Sciatic nerve (tissue), 2 donors: ENCODE measurements at regions of chr5 and their contacts with region 1.

Region 1: DNA sequence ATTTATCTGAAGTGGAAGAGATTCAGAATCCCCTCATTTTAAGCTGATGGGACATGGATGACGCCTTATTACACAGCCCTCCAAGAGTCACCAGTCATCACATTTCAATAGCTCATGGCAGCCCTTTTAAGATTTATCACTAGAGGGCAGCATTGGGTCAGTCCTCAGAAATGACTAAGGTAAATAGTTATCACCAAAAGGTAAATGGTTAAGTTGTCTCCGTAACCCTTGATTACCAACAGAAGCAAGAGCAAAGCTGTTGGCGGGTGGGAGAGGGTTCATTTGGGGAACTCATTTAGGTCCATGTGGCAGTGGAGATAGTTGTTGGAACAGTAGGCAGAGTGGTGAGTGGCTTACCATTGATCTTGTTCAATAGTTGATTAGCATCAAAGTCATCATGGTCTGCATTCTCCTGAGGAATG is 12.0 kb upstream of the C9 start:
- DNase-seq: no peak
- ATAC-seq: peak; percentile 65

Region 2: DNA sequence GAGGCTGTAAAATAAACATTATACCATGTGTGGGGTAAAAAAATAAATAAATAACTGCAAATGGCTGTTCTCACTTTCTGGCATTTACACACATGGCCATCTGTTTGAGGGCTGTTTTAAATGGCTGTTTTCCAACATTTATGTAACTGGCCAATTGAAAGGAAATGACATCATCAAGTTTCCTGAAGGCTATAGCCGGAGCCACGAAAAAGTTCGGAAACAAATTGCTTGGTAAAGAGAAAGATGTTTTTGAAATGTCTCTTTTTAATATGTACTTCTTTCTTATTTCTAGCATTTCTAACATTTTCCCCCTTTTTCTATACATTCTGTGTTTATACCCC is 143.9 kb after region 1 on chr5:
- intact Hi-C with region 1: no loop called
- DNase-seq: no peak
- ATAC-seq: peak; percentile 82

Region 3: DNA sequence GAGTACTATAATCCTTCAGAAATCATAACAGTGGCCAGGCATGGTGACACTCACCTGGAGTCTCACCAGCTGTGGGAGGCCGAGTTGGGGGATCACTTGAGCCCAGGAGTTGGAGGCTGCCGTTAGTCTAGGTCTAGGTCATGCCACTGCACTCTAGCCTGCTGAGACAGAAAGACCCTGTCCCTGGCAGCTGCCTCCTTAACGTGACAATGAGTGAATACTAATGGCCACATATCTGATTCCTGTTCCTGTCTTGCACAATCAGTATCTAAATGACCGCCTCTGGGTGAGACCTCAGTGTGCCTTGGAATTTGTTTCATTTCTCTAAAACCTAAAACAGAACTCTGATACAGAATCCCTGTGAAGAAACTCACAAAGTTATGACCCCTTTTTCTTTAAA is 179.5 kb after region 1 on chr5:
- intact Hi-C with region 1: loop called (anchors 10 kb)
- DNase-seq: no peak
- ATAC-seq: peak; percentile 36